Activated naive CD8-positive, alpha-beta T cell treated with anti-CD3 and anti-CD28 coated beads, Interleukin-2, amount 10 ng/mL, durations not matched to agents 7 days and 5 days (primary cell): ENCODE measurements at regions of chrX and their contacts with region 1.

Region 1: DNA sequence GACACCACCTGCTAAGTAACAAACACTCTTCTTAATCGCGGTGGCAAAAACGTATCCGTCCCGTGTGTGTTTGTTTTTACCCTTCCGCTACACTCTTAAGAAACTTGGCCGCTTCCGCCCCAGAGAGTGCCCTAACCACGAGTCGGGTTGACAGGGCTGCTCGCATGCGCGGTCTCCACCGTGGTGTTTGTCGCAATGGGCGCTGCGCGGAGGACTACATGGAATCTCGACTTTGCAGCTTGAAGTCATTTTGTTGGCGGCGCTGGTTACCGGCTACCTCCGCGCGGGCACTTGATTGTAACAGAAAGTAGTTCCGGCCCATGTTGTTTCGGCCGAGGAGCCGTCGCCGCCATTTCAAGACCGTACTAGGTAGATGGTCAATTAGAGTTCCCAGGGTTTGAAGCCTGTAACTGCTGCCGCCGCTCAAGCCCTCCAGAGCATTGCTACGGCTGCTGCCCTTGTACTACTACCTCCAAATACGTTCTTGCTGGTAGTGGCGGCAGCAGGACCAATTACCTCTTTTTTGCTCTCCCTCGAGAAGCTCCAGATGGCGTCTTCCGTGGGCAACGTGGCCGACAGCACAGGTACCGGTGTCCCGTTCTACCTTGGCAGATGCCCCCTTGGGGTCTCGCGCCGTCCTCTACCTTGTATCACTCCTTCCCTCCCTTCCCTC is at the start of gene OGT:
- DNase-seq: peak; percentile 83
- ATAC-seq: peak; percentile 79
- H3K4me3 Mint-ChIP-seq: peak within 1 kb of the TSS; percentile 89
- H3K27ac Mint-ChIP-seq: peak within 1 kb of the TSS; percentile 93
- H3K4me1 Mint-ChIP-seq: peaks cover 18% of the 10 kb centered on the region
- H3K27me3 Mint-ChIP-seq: no peaks in the 10 kb centered on the region
- total RNA-seq, gene OGT: 487 to 498 TPM

Region 2: GRCh38 chrX:71283403-71284143 is 249.3 kb before region 1 on chrX and contains the start of gene NONO:
- POLR2A ChIA-PET with region 1: interaction called, 24 read pairs
- DNase-seq: peak; percentile 75
- ATAC-seq: peak; percentile 85
- H3K4me3 Mint-ChIP-seq: peak within 1 kb of the TSS; percentile 93
- H3K27ac Mint-ChIP-seq: peak within 1 kb of the TSS; percentile 99
- H3K4me1 Mint-ChIP-seq: peaks cover 18% of the 10 kb centered on the region
- H3K27me3 Mint-ChIP-seq: no peaks in the 10 kb centered on the region
- total RNA-seq, gene NONO: 438 to 466 TPM

Region 3: DNA sequence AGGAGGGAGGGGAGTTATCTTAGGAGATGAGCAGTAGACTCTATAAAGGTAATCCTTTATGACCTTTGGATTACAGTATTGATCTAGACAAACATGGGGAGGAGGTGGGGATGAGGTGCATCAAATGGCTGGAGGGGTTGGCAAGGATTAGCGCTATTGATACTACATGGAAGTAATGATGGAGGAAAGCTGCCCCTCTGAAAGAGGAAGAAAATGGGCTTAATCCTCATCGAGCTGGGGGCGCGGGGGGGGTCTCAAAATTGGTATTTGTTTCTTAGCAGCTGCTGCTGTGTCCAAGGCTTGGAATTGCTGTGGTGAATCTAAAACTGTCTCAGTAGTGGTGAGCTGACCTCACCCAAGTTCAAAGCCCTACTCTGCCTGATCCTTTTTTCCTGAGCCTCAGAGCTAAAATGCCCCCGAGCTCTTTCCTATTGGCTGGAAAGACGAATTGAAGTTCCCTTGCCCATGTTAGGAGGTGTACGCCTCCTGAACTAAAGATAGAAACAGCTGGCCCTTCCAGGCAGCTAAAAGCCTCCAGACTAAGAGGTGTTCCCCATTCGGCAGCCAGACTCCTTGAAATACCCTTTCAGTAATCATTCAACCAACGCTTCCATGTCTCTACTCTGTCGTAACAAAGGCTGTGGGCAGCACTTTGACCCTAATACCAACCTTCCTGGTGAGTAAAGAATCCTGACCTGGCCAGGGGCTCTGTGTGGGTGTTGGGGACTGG is 231.5 kb before region 1 on chrX and contains the start of gene ITGB1BP2:
- POLR2A ChIA-PET with region 1: interaction called, 10 read pairs
- DNase-seq: no peak
- ATAC-seq: no peak
- H3K4me3 Mint-ChIP-seq: no peak within 1 kb of the TSS
- H3K27ac Mint-ChIP-seq: peak within 1 kb of the TSS; percentile 73
- H3K4me1 Mint-ChIP-seq: peaks cover 14% of the 10 kb centered on the region
- H3K27me3 Mint-ChIP-seq: no peaks in the 10 kb centered on the region
- total RNA-seq, gene ITGB1BP2: 4.9 to 6.6 TPM

Region 4: GRCh38 chrX:71365876-71366673 is 166.8 kb before region 1 on chrX and contains the start of gene TAF1:
- POLR2A ChIA-PET with region 1: interaction called, 29 read pairs
- DNase-seq: peak; percentile 81
- ATAC-seq: peak; percentile 93
- H3K4me3 Mint-ChIP-seq: peak within 1 kb of the TSS; percentile 97
- H3K27ac Mint-ChIP-seq: peak within 1 kb of the TSS; percentile 98
- H3K4me1 Mint-ChIP-seq: peaks cover 13% of the 10 kb centered on the region
- H3K27me3 Mint-ChIP-seq: no peaks in the 10 kb centered on the region
- total RNA-seq, gene TAF1: 64.7 to 66.8 TPM

Region 5: DNA sequence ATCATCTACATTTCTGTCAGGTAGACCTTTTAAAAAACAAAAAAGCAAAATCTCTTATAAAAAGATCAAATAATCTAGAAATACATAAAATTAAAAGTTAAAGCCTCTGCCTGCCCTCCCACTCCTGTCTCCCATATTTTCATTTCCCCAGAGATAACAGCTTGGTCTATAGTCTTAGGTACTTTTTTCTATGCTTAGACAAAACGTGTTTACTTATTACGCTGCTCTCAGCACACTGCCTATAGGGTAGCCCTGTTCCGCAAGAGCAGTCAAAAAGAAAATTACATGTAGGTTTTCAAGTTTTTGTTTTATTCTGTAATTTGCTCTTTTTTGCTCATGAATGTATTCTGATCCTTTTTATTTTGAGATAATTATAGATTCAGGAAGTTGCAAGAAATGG is 93.5 kb before region 1 on chrX:
- POLR2A ChIA-PET with region 1: no interaction called
- DNase-seq: no peak
- ATAC-seq: no peak
- H3K4me3 Mint-ChIP-seq: no peak overlapping the region
- H3K27ac Mint-ChIP-seq: no peak overlapping the region
- H3K4me1 Mint-ChIP-seq: no peaks in the 10 kb centered on the region
- H3K27me3 Mint-ChIP-seq: no peaks in the 10 kb centered on the region

Region 6: GRCh38 chrX:71475785-71476540 is 56.9 kb before region 1 on chrX:
- POLR2A ChIA-PET with region 1: no interaction called
- DNase-seq: no peak
- ATAC-seq: no peak
- H3K4me3 Mint-ChIP-seq: no peak overlapping the region
- H3K27ac Mint-ChIP-seq: no peak overlapping the region
- H3K4me1 Mint-ChIP-seq: peaks cover 2% of the 10 kb centered on the region
- H3K27me3 Mint-ChIP-seq: no peaks in the 10 kb centered on the region

Region 7: DNA sequence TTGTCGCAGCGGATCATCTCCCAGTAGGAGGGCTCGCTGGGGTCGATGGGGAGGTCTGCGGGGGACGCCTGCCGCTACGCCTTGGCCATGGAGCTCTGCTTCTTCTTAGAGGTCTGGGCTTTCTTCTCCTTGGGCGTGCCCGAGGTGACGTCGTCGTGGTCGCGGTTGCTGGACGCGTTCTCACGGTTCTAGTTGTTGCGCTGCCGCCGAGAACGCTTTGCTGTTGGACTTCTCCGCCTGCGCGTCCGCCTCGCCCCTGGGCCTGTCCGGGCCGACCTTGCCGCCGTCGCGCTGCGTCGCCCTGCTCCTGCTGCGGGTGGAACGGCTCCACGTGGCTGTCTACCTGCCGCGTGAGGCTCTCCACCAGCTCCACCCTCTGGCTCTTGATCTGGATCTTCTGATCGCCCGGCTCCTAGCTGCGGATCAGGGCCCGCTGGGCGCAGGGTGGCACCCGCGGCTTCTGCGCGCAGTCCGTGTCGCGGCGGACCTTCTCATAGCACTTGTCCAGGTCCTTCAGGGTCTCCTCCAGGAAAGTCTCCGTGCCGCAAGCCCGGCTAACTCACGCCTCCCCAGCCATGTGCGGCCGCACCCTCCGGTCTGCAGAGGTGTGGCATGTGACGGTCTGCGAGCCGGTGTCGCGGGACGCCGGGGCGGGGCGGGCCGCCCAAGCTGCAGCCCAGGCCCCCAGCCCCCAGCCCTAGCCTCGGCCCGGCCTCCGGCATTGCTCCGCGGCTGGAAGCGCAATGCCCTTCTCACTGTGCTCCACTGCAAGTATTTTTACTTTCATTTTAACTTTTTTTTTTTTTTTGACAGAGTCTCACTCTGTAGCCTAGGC is 40.4 kb before region 1 on chrX:
- POLR2A ChIA-PET with region 1: interaction called, 44 read pairs
- DNase-seq: peak; percentile 62
- ATAC-seq: peak; percentile 85
- H3K4me3 Mint-ChIP-seq: peak overlapping the region; percentile 84
- H3K27ac Mint-ChIP-seq: peak overlapping the region; percentile 79
- H3K4me1 Mint-ChIP-seq: peaks cover 8% of the 10 kb centered on the region
- H3K27me3 Mint-ChIP-seq: no peaks in the 10 kb centered on the region

Region 8: DNA sequence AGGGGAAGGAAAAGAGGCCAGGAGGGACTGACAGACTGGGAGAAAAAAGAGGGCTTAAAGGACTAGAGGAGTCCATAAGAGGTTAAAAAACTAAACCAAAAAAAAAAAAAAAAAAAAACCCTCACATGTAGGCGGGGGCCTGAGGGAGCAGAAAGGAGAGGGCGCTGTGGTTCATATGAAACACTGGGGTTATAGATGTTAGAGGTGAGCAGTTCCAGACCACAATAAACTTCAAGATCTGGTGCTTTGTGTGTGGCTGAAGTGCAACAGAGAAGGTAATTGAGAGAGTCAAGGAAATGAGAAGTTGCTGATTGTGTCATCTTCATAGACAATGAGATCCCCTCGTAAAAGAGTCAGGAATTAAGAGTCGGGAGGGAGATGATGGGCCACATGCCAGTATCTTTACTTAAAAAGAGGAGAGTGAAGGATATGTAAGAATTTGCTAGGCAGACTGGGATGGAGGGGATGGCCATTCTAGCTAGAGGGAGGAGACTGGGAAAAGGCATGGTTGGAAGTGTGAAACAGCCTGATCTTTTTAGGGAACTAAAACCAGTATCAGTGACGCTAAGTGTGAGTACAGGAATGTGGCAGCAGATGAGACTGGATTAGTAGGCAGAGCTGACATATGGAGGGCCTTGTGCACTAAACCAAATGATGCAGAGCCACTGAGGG is 18.4 kb before region 1 on chrX:
- POLR2A ChIA-PET with region 1: interaction called, 38 read pairs
- DNase-seq: no peak
- ATAC-seq: peak; percentile 96
- H3K4me3 Mint-ChIP-seq: peak overlapping the region; percentile 26
- H3K27ac Mint-ChIP-seq: peak overlapping the region; percentile 90
- H3K4me1 Mint-ChIP-seq: peaks cover 14% of the 10 kb centered on the region
- H3K27me3 Mint-ChIP-seq: no peaks in the 10 kb centered on the region

Region 9: GRCh38 chrX:71565474-71566041 is 32.7 kb after region 1 on chrX:
- POLR2A ChIA-PET with region 1: no interaction called
- DNase-seq: no peak
- ATAC-seq: no peak
- H3K4me3 Mint-ChIP-seq: no peak overlapping the region
- H3K27ac Mint-ChIP-seq: no peak overlapping the region
- H3K4me1 Mint-ChIP-seq: no peaks in the 10 kb centered on the region
- H3K27me3 Mint-ChIP-seq: no peaks in the 10 kb centered on the region

Region 10: DNA sequence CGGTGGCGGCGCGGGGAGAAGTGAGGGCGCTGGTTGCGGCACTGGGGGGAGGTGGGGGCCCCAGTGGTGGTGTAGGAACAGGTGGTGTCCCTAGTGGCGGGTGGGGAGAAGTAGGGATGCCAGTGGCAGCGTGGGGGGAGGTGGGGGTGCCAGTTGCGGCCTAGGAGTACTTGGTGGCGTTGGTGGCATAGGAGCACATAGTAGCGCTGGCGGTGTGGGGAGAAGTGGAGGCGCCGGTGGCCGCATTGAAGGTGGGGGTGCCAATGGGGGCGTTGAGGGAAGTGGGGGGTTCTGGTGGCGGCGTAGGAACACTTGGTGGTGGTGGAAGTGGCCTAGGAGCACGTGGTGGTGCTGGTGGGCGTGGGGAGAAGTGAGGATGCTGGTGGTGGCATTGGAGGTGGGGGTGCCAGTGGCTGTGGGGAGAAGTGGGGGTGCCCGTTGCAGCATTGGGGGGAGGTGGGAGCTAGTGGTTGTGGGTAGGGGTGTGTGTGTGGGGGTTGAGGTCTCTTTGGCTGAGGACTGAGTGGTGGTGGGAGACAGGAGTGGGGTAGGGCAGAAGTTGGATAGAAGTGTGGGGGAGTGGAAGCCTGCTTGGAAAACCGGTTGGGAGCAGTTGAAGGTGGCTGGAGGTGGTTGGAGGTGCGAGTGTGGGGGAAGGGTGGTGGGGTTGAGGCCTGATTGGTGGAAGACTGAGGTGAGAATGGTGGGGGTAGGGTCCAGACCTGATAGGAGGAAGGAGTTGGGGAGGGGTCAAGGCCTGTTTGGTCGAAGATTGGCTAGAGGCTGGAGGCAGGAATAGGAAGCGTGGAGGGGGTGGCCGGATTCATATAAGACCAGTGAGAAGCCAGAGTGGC is 46.5 kb after region 1 on chrX:
- POLR2A ChIA-PET with region 1: no interaction called
- DNase-seq: no peak
- ATAC-seq: no peak
- H3K4me3 Mint-ChIP-seq: no peak overlapping the region
- H3K27ac Mint-ChIP-seq: peak overlapping the region; percentile 64
- H3K4me1 Mint-ChIP-seq: peaks cover 4% of the 10 kb centered on the region
- H3K27me3 Mint-ChIP-seq: no peaks in the 10 kb centered on the region

Region 11: DNA sequence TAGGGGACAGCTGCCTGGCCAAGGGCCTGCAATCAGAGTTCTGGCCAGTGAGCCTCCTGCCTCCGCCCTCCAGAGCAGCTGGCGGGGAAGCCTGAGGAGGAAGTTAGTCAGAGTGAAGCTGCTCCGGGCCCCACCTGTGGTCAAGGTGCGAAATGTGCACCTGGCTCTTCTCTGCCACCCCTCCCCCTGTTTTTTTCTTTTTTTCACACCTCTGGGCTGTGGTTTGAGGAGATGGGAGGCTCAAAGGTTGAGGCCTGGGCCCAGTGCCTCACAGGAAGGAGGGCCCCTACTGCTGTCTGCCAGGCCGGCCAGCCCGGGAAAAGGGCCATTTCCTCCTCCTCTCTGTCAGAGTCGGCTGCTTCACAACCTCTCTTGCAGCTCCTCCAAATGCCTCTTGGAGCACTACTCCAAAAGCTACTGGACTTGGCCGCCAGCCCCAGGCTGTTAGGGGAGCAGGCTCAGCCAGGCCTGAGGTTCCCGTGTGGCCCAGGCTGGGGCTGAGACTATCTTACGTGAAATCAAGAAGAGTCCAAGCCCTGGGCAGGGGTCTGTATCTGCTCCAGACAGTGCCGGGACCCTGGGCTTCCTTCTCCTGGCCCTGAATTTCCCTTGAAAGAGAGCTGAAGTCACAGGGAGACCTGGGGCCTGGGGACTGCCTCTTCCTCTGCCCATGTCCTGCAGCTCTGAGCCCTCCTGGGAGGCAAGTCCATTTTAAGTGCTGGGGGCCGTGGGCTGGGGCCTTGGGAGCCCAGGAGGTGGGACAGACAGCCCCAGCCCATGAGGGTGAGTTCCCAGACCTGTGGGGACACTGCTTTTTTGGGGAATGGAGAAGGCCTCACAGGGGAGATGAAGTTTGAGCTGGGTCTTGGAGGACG is 89.9 kb after region 1 on chrX:
- POLR2A ChIA-PET with region 1: interaction called, 27 read pairs
- DNase-seq: peak; percentile 70
- ATAC-seq: peak; percentile 77
- H3K4me3 Mint-ChIP-seq: peak overlapping the region; percentile 78
- H3K27ac Mint-ChIP-seq: peak overlapping the region; percentile 95
- H3K4me1 Mint-ChIP-seq: peaks cover 39% of the 10 kb centered on the region
- H3K27me3 Mint-ChIP-seq: no peaks in the 10 kb centered on the region